CD4-positive, alpha-beta T cell (primary cell): ENCODE measurements at regions of chr19 and their contacts with region 1.

Region 1: GRCh38 chr19:54297760-54298305 is 15.1 kb downstream of the LILRA5 start:
- DNase-seq: no peak
- ATAC-seq: no peak
- H3K4me3 ChIP-seq: no peak overlapping the region
- H3K4me3 Mint-ChIP-seq: no peak overlapping the region
- H3K27ac ChIP-seq: no peak overlapping the region
- H3K27ac Mint-ChIP-seq: no peak overlapping the region
- H3K4me1 ChIP-seq: no peaks in the 10 kb centered on the region
- H3K4me1 Mint-ChIP-seq: peaks cover 8% of the 10 kb centered on the region
- H3K27me3 ChIP-seq: peaks cover 9 to 14% of the 10 kb centered on the region in 2 experiments
- H3K27me3 Mint-ChIP-seq: peaks cover 16% of the 10 kb centered on the region
- CTCF ChIP-seq: no peak

Region 2: GRCh38 chr19:54517483-54517882 is 219.7 kb after region 1 on chr19:
- CTCF ChIA-PET with region 1: no interaction called
- POLR2A ChIA-PET with region 1: no interaction called
- intact Hi-C with region 1: loop called in 1 of 2 experiments (anchors 10 kb)
- DNase-seq: peak; percentile 20 to 75 (median 37)
- ATAC-seq: peak; percentile 49
- H3K4me3 ChIP-seq: no peak overlapping the region
- H3K4me3 Mint-ChIP-seq: no peak overlapping the region
- H3K27ac ChIP-seq: no peak overlapping the region
- H3K27ac Mint-ChIP-seq: no peak overlapping the region
- H3K4me1 ChIP-seq: peaks cover 15% of the 10 kb centered on the region
- H3K4me1 Mint-ChIP-seq: peaks cover 37% of the 10 kb centered on the region
- H3K27me3 ChIP-seq: peaks cover 0 to 9% of the 10 kb centered on the region in 2 experiments
- H3K27me3 Mint-ChIP-seq: peaks cover 36% of the 10 kb centered on the region
- CTCF ChIP-seq: no peak

Region 3: DNA sequence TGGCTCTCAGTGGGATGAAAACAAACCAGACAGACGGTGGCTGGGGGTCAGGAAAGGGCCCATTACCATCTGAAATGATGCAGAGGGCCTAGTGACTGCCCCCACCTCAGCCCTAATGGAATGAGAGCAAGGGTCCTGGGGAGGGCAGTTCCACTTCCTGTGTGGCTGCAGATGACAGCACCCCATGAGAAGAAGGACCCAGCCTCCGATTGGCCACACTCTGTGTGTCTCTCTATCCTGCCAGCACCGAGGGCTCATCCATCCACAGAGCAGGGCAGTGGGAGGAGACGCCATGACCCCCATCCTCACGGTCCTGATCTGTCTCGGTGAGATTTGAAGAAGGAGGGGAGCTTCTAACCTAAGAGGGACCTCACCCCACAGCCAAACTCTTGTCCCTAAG is 332.9 kb after region 1 on chr19:
- CTCF ChIA-PET with region 1: no interaction called
- POLR2A ChIA-PET with region 1: no interaction called
- intact Hi-C with region 1: loop called in 1 of 2 experiments (anchors 5 kb)
- DNase-seq: no peak
- ATAC-seq: no peak
- H3K4me3 ChIP-seq: peak overlapping the region; percentile 13
- H3K4me3 Mint-ChIP-seq: no peak overlapping the region
- H3K27ac ChIP-seq: no peak overlapping the region
- H3K27ac Mint-ChIP-seq: no peak overlapping the region
- H3K4me1 ChIP-seq: no peaks in the 10 kb centered on the region
- H3K4me1 Mint-ChIP-seq: no peaks in the 10 kb centered on the region
- H3K27me3 ChIP-seq: peaks cover 12 to 15% of the 10 kb centered on the region in 2 experiments
- H3K27me3 Mint-ChIP-seq: peaks cover 55% of the 10 kb centered on the region
- CTCF ChIP-seq: no peak